Dorsolateral prefrontal cortex (tissue), 120 donors: ENCODE measurements at regions of chr6 and their contacts with region 1.

Region 1: DNA sequence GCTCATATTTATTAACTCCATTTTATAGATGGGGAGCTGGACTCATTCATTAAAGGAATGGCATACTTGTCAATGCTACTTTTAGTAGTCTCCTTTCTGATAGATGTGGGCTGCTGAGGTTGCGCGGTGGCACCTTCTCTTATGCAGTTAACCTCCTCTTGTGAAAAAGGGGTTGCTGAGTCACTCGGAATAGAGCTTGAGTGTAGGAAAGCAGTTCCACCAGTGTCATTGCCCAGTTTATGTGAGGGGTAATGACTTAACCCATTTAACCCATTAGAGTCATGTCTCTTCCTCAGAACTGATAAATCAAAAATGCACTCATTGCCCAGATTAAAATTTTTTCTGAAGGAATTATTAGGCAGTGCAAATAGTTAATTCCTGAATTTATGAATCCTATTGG is 6.3 kb downstream of the MAPK14 start:
- DNase-seq: no peak
- H3K4me3 ChIP-seq: peak overlapping the region in 5 of 59 donors; percentile 4 to 29 (median 7)
- H3K27ac ChIP-seq: peak overlapping the region in 6 of 59 donors; percentile 4 to 73 (median 24)
- H3K27me3 ChIP-seq: no peaks in the 10 kb centered on the region
- CTCF ChIP-seq: no peak

Region 2: GRCh38 chr6:35893246-35893645 is 140.7 kb before region 1 on chr6:
- intact Hi-C with region 1: no loop called
- DNase-seq: no peak
- H3K4me3 ChIP-seq: no peak overlapping the region
- H3K27ac ChIP-seq: no peak overlapping the region
- H3K27me3 ChIP-seq: no peaks in the 10 kb centered on the region
- CTCF ChIP-seq: no peak

Region 3: GRCh38 chr6:35993150-35993549 is 40.8 kb before region 1 on chr6:
- intact Hi-C with region 1: no loop called
- DNase-seq: no peak
- H3K4me3 ChIP-seq: no peak overlapping the region
- H3K27ac ChIP-seq: no peak overlapping the region
- H3K27me3 ChIP-seq: no peaks in the 10 kb centered on the region
- CTCF ChIP-seq: no peak

Region 4: DNA sequence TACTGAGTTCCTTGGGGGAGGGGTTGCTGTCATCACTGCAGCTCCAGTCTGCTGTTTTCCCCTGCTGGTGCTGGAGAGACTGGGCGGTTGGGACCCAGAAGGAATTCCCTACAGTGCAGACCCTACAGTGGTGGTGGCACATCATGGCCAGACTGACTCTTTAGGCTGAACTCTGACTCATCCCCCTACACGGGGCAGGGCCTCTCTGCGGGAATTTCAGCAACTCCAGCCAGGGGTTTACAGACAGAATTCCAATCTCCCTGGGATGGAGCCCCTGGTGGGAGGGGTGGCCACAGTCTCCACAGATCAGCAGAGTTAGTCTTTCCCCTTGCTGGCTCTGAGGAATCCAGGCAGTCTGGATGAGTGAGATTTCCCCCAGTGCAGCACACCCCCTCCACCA is 49.5 kb after region 1 on chr6:
- intact Hi-C with region 1: loop called in 1 of 2 experiments (anchors 2 kb)
- DNase-seq: no peak
- H3K4me3 ChIP-seq: no peak overlapping the region
- H3K27ac ChIP-seq: no peak overlapping the region
- H3K27me3 ChIP-seq: no peaks in the 10 kb centered on the region
- CTCF ChIP-seq: no peak